ENCODE measurements at regions of chr15 and their contacts with region 1.

Region 1: DNA sequence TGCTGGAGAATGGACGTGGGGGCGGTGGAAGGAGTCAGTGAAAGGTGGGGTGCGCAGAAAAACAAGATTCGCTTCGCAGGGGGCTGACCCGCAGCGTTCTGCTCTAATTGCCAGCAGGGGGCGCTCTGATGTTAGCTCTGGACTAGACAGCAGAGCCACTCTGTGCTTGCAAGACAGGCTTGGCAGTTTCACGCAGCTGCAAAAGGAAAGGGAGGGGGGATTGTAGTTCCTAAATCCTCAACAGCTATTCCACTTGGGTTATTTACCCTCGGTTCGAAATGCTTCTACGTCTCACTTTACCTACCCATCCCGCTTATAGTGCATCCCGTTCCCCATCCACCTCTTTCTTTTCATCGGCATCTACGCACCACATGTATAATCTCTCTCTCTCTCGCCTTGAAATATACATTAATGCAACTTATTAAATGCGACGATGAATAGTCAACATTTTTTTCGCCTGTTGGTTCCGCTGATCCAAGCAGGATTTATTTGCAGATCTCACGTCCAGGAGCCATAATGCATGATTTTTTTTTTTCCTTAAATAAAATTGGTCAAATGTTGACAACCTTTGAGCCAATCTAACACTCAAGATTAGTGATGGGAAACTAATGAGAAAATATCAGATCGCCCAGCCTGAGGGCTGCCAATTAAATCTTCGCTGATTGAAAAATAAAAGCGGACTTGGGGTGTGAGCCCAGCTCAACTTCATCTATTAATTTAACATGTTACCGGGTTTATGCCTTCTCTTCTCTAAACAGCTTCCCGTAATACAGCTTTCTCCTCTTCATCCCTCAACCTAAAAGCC is 216.4 kb downstream of the MEIS2 start:
- DNase-seq: peak; percentile 86
- ATAC-seq: peak; percentile 90
- H3K4me3 ChIP-seq: peak overlapping the region; percentile 35; the same call in 1 of the 2 replicates
- H3K27ac ChIP-seq: no peak overlapping the region
- H3K4me1 ChIP-seq: peaks cover 3% of the 10 kb centered on the region; the same call in 1 of the 2 replicates
- H3K27me3 ChIP-seq: peaks cover 24% of the 10 kb centered on the region
- CTCF ChIP-seq: peak; percentile 88
- POLR2A ChIP-seq: no peak
- RAD21 ChIP-seq: peak; percentile 91

Region 2: DNA sequence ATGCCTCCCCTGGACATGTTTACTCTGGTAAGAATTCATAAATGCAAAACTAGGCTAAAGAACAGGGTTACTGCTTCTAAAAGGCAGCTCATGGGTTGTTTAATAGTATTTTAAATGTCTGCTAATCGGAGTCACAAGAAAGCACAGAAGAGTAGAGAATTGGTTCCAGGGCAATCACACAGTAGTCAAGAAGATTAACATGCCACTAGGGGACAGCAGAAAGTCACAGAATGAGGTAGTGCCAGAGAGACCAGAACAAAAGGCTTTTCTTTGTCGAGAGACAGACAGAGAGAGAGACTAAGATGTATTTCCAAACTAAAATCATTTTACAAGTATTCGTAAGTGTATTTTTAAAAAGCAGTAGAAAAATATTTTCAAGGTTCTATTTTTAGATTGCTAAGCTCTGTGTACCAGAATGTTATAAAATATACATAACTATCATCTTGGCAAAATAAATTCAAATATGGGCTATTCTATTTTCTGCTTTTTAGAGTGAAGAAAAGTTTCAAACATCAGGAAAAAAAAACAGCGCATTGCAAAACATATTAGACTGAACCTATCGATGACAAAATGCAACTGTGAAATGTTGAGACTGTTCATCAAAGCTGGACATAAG is 382.7 kb before region 1 on chr15:
- CTCF ChIA-PET with region 1: interaction called, 5 read pairs
- POLR2A ChIA-PET with region 1: no interaction called
- dilution Hi-C with region 1: no loop called
- in situ Hi-C with region 1: no loop called
- intact Hi-C with region 1: loop called (anchors 10 kb)
- DNase-seq: peak; percentile 79
- ATAC-seq: peak; percentile 89
- H3K4me3 ChIP-seq: no peak overlapping the region
- H3K27ac ChIP-seq: no peak overlapping the region
- H3K4me1 ChIP-seq: peaks cover 5% of the 10 kb centered on the region
- H3K27me3 ChIP-seq: no peaks in the 10 kb centered on the region
- CTCF ChIP-seq: peak; percentile 79
- POLR2A ChIP-seq: peak; percentile 28; the same call in 1 of the 2 replicates
- RAD21 ChIP-seq: peak; percentile 90

Region 3: GRCh38 chr15:36832774-36833463 is 51.0 kb before region 1 on chr15:
- CTCF ChIA-PET with region 1: no interaction called
- POLR2A ChIA-PET with region 1: no interaction called
- dilution Hi-C with region 1: no loop called
- in situ Hi-C with region 1: no loop called
- intact Hi-C with region 1: no loop called
- DNase-seq: peak; percentile 27
- ATAC-seq: no peak
- H3K4me3 ChIP-seq: no peak overlapping the region
- H3K27ac ChIP-seq: no peak overlapping the region
- H3K4me1 ChIP-seq: peaks cover 10% of the 10 kb centered on the region
- H3K27me3 ChIP-seq: no peaks in the 10 kb centered on the region
- CTCF ChIP-seq: no peak
- POLR2A ChIP-seq: no peak
- RAD21 ChIP-seq: no peak

Region 4: DNA sequence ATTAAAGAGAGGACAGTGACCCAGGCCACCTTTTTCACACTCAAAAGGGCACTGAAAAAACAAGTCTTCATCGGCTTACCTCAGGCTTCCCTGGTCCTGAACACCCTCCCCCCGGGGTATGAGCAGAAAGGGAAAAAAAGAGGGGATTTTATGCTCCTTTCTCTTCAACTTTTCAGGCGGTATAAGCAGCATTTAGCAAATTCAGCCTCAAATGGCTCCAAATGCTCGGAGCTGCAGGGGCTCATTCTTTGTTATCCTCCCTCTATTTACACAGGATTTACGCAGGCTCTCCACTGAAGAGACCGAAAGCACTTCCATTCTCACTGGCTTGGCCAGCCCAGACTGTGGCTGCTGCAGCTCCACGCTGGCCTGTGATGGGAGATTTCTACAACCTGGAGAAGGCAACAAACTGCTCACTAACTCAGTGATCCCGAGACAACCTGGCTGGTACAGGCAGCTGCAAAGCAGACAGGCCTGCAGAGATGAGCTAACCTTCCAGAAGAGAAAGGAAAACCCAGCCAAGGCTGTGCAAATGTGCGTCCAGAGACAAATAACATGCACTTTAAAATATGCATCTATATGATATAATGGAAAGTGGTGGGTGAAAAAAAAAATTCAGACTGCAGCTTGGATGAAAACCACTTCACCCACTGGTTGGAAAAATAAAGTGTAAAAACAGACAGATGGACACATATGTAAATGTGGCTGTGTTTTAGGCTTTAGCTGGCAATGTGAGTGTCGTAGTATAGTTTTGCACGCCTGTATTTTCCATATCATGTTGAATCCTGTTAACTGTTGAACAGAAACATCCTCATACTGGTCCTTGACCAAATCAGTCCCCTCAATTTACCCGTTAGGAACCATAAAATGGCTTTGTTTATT is 162.2 kb after region 1 on chr15:
- CTCF ChIA-PET with region 1: no interaction called
- POLR2A ChIA-PET with region 1: no interaction called
- dilution Hi-C with region 1: no loop called
- in situ Hi-C with region 1: no loop called
- intact Hi-C with region 1: no loop called
- DNase-seq: no peak
- ATAC-seq: no peak
- H3K4me3 ChIP-seq: no peak overlapping the region
- H3K27ac ChIP-seq: no peak overlapping the region
- H3K4me1 ChIP-seq: peaks cover 7% of the 10 kb centered on the region
- H3K27me3 ChIP-seq: no peaks in the 10 kb centered on the region
- CTCF ChIP-seq: no peak
- POLR2A ChIP-seq: no peak
- RAD21 ChIP-seq: no peak

Region 5: GRCh38 chr15:37076543-37076942 is 192.6 kb after region 1 on chr15:
- CTCF ChIA-PET with region 1: no interaction called
- POLR2A ChIA-PET with region 1: no interaction called
- dilution Hi-C with region 1: no loop called
- in situ Hi-C with region 1: no loop called
- intact Hi-C with region 1: no loop called
- DNase-seq: peak; percentile 78
- ATAC-seq: peak; percentile 50; the same call in 1 of the 2 replicates
- H3K4me3 ChIP-seq: no peak overlapping the region
- H3K27ac ChIP-seq: no peak overlapping the region
- H3K4me1 ChIP-seq: peaks cover 9% of the 10 kb centered on the region
- H3K27me3 ChIP-seq: no peaks in the 10 kb centered on the region
- CTCF ChIP-seq: no peak
- POLR2A ChIP-seq: no peak
- RAD21 ChIP-seq: no peak

Region 6: GRCh38 chr15:37100109-37100965 is 216.4 kb after region 1 on chr15 and contains the start of gene MEIS2:
- CTCF ChIA-PET with region 1: interaction called, 4 read pairs
- POLR2A ChIA-PET with region 1: no interaction called
- dilution Hi-C with region 1: no loop called
- in situ Hi-C with region 1: no loop called
- intact Hi-C with region 1: loop called (anchors 1 kb)
- DNase-seq: peak; percentile 96
- ATAC-seq: peak; percentile 52
- H3K4me3 ChIP-seq: peak within 1 kb of the TSS; percentile 94
- H3K27ac ChIP-seq: peak within 1 kb of the TSS; percentile 99
- H3K4me1 ChIP-seq: peaks cover 3% of the 10 kb centered on the region
- H3K27me3 ChIP-seq: no peaks in the 10 kb centered on the region
- CTCF ChIP-seq: no peak
- POLR2A ChIP-seq: peak; percentile 77
- RAD21 ChIP-seq: no peak
- total RNA-seq, gene MEIS2: 50.3 and 71.3 TPM in 2 replicates

Region 7: GRCh38 chr15:37880009-37880834 is 996.3 kb after region 1 on chr15:
- CTCF ChIA-PET with region 1: no interaction called
- POLR2A ChIA-PET with region 1: no interaction called
- dilution Hi-C with region 1: no loop called
- in situ Hi-C with region 1: loop called (anchors 25 kb)
- intact Hi-C with region 1: loop called (anchors 10 kb)
- DNase-seq: peak; percentile 75
- ATAC-seq: peak; percentile 76
- H3K4me3 ChIP-seq: no peak overlapping the region
- H3K27ac ChIP-seq: no peak overlapping the region
- H3K4me1 ChIP-seq: peaks cover 12% of the 10 kb centered on the region
- H3K27me3 ChIP-seq: no peaks in the 10 kb centered on the region
- CTCF ChIP-seq: peak; percentile 86
- POLR2A ChIP-seq: no peak
- RAD21 ChIP-seq: peak; percentile 87